ENCODE measurements at regions of chr2 and their contacts with region 1.

Region 1: DNA sequence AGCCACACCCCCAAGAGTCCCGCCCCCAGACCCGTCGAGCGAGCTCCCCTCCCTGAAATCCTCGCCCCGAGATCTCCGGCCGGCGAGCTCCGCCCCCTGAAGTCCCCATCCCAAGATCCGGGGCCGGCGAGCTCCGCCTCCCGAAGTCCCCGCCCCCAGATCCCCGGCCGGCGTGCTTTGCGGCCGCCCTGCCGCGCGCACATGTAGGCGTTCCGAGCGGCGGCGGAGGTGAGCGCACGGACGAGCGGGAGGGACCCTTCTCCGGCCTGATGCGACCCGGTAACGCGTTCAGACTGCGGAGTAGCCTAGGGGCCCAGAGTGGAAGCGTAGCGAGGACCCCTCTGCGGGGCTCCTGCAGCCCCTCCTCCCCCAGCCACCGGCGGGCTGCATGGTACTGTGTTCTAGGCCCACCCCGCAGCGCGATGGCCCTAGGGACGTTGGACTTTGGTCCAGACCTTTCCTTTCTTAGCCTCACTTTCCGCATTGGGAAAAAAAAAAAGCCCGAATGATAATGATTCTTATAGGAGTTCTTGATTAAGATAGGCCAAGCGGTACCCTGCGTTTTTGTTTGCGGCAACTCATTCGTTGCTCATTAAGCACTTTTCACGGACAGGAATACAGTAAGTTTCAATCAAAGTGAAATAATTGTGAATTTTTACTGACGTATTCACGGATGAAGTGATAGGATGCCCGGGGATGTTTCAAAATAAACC is at the start of gene TMEM177:
- DNase-seq: peak; percentile 91
- H3K4me3 ChIP-seq: peak within 1 kb of the TSS; percentile 99
- H3K27ac ChIP-seq: peak within 1 kb of the TSS; percentile 43
- H3K4me1 ChIP-seq: peaks cover 8% of the 10 kb centered on the region
- CTCF ChIP-seq: no peak
- total RNA-seq, gene TMEM177: 31.8 and 36.7 TPM in 2 replicates

Region 2: DNA sequence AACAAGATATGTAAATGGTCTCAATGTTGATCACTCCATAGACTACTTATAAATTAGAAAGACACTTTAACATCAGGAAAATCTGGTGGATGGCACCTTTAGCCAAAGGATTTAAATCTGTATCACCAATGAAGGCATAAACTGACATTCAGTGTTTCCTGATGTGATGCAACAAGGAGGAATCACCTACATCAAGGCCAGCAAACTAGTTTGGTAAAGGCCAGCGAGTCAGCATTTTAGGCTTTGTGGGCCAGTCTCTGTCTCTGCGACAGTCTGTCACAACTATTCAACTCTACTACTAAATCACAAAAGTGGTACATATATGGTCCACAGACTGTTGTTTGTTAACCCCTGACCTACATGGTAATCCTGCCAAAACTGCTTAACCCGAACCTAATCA is 345.8 kb before region 1 on chr2:
- CTCF ChIA-PET with region 1: no interaction called
- POLR2A ChIA-PET with region 1: no interaction called
- intact Hi-C with region 1: no loop called
- DNase-seq: no peak
- H3K4me3 ChIP-seq: no peak overlapping the region
- H3K27ac ChIP-seq: no peak overlapping the region
- H3K4me1 ChIP-seq: peaks cover 20% of the 10 kb centered on the region
- CTCF ChIP-seq: no peak

Region 3: DNA sequence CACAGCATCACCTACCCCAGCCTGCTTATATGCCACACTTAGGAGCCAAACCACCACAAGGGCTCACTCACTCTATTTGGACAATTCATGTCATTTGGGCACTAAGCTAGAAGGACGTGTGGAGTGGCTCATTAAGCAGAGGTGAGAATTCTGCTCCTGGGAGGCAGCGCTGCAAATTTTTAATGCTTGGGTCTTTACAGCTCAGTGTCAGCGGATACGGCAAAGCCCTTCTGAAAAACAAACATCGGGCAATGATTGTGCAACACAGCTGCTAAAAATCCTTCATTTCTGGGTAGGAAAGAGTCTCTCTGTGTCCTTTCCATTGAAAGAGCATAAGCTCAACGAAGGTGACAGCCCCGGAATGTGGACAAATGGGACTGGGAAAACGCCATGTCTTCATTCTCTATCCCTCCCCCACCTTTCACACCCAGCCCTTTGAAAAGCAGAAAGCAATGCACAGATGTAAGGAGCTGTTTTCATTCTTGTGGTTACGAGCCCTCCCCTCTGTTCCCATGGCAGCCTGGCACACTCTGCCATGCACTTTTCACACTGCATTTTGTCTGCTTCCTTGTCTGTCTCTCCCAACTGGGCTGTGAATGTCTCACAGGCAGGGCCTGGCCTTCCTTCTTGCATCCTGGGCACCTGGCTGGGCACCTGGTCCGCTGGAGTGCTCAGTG is 15.8 kb after region 1 on chr2:
- CTCF ChIA-PET with region 1: no interaction called
- POLR2A ChIA-PET with region 1: interaction called, 10 read pairs
- intact Hi-C with region 1: loop called (anchors 1 kb)
- DNase-seq: no peak
- H3K4me3 ChIP-seq: no peak overlapping the region
- H3K27ac ChIP-seq: no peak overlapping the region
- H3K4me1 ChIP-seq: peaks cover 47% of the 10 kb centered on the region
- CTCF ChIP-seq: no peak

Region 4: GRCh38 chr2:119910566-119910965 is 231.4 kb after region 1 on chr2:
- CTCF ChIA-PET with region 1: no interaction called
- POLR2A ChIA-PET with region 1: no interaction called
- intact Hi-C with region 1: no loop called
- DNase-seq: no peak
- H3K4me3 ChIP-seq: no peak overlapping the region
- H3K27ac ChIP-seq: no peak overlapping the region
- H3K4me1 ChIP-seq: no peaks in the 10 kb centered on the region
- CTCF ChIP-seq: no peak